Common myeloid progenitor, CD34-positive (primary cell): ENCODE measurements at regions of chr14 and their contacts with region 1.

Region 1: DNA sequence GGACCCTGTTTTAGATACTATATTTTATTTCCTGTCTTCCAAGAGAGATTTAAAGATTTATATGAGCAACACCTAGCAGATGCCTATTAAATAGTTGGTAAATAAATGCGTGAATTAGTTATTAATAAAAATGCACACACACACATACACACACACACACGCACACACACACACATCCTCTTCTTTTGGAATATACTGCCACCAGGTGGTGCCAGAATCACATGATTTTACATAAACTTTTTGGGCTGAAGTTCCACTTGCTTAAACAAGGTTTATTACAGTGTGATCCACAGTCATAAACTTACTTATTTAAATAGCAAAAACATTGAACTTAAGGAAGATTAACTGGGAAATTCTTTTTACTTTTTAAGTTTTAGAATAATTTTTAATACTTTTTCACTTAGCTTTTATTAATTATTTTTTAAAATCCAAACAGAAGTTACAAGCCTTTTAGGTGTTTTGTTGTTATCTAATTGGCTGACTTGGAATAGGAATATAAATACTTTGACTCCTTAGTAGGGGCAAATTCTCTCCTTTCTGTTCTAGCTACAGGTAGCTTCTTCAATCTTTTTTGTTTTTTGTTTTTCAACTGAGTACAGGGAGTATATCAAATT is 17.5 kb downstream of the RAD51B start:
- DNase-seq: peak; percentile 90 to 94 (median 93)
- H3K4me3 ChIP-seq: no peak overlapping the region
- H3K27ac ChIP-seq: no peak overlapping the region
- H3K4me1 ChIP-seq: no peaks in the 10 kb centered on the region
- H3K27me3 ChIP-seq: no peaks in the 10 kb centered on the region

Region 2: GRCh38 chr14:67850066-67850830 is 13.1 kb after region 1 on chr14:
- CTCF ChIA-PET with region 1: interaction called, 14 read pairs
- POLR2A ChIA-PET with region 1: interaction called, 4 read pairs
- DNase-seq: no peak
- H3K4me3 ChIP-seq: peak overlapping the region in 1 of 7 experiments; percentile 33
- H3K27ac ChIP-seq: no peak overlapping the region
- H3K4me1 ChIP-seq: peaks cover 17 to 44% (median 36%) of the 10 kb centered on the region in 4 experiments
- H3K27me3 ChIP-seq: no peaks in the 10 kb centered on the region

Region 3: DNA sequence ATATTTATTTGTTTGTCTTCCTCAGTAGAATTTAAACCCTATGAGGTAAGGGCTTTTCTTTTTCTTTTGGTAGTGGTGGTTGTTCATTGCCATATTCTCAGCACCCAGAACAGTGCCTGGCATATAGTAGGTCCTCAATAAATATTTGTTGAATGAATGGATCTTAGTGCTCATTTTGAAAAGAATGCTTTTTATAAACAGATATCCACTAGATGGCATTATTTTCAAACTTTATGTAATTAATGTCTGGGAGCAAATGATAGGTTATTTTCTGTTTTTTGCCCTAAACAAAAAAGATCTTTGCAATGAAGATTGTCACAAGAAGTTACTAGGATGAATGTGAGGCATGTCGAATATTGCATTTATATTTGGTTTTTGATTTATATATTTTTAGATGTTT is 46.6 kb after region 1 on chr14:
- CTCF ChIA-PET with region 1: interaction called, 11 read pairs
- POLR2A ChIA-PET with region 1: no interaction called
- DNase-seq: peak; percentile 29 to 47 (median 42)
- H3K4me3 ChIP-seq: no peak overlapping the region
- H3K27ac ChIP-seq: no peak overlapping the region
- H3K4me1 ChIP-seq: peaks cover 11 to 33% (median 19%) of the 10 kb centered on the region in 4 experiments
- H3K27me3 ChIP-seq: no peaks in the 10 kb centered on the region

Region 4: DNA sequence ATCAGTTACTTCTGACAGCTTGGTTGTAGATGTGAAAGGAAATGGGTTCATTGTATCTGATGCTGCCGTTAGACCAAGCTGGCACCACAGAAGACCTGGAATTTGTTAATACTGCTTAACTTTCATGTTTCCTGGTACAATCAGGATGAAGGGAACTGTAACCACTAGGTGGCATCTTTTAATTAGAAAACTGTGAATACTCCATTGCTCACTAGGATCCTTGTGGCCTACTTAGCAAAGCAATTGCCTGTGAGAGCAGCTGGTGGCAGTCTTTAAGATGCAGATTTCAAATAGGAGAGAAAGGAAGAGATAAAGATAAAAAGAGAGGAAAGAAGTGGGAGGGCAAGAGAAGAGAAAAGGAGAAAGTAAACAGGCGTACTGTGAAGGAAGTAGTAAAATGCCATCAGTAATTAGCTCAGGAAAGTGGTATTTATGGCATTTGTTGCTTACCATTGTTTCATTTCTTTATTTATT is 96.9 kb after region 1 on chr14:
- CTCF ChIA-PET with region 1: interaction called, 20 read pairs
- POLR2A ChIA-PET with region 1: no interaction called
- DNase-seq: peak; percentile 81 to 87 (median 86)
- H3K4me3 ChIP-seq: no peak overlapping the region
- H3K27ac ChIP-seq: no peak overlapping the region
- H3K4me1 ChIP-seq: peaks cover 0 to 12% (median 7%) of the 10 kb centered on the region in 4 experiments
- H3K27me3 ChIP-seq: no peaks in the 10 kb centered on the region

Region 5: GRCh38 chr14:67943947-67944346 is 106.8 kb after region 1 on chr14:
- CTCF ChIA-PET with region 1: interaction called, 10 read pairs
- POLR2A ChIA-PET with region 1: no interaction called
- DNase-seq: peak; percentile 90 to 94 (median 94)
- H3K4me3 ChIP-seq: no peak overlapping the region
- H3K27ac ChIP-seq: no peak overlapping the region
- H3K4me1 ChIP-seq: peaks cover 6 to 22% (median 7%) of the 10 kb centered on the region in 4 experiments
- H3K27me3 ChIP-seq: no peaks in the 10 kb centered on the region

Region 6: GRCh38 chr14:68649476-68650189 is 812.5 kb after region 1 on chr14:
- CTCF ChIA-PET with region 1: no interaction called
- POLR2A ChIA-PET with region 1: no interaction called
- DNase-seq: no peak
- H3K4me3 ChIP-seq: no peak overlapping the region
- H3K27ac ChIP-seq: no peak overlapping the region
- H3K4me1 ChIP-seq: peaks cover 2 to 31% (median 17%) of the 10 kb centered on the region in 4 experiments
- H3K27me3 ChIP-seq: no peaks in the 10 kb centered on the region